Breast epithelium (tissue), 4 donors: ENCODE measurements at regions of chr12 and their contacts with region 1.

Region 1: GRCh38 chr12:120156315-120157259 is 37.9 kb downstream of the GCN1 start:
- DNase-seq: no peak
- H3K4me3 ChIP-seq: no peak overlapping the region
- H3K27ac ChIP-seq: no peak overlapping the region
- H3K4me1 ChIP-seq: no peaks in the 10 kb centered on the region
- H3K27me3 ChIP-seq: no peaks in the 10 kb centered on the region
- CTCF ChIP-seq: no peak
- POLR2A ChIP-seq: no peak

Region 2: DNA sequence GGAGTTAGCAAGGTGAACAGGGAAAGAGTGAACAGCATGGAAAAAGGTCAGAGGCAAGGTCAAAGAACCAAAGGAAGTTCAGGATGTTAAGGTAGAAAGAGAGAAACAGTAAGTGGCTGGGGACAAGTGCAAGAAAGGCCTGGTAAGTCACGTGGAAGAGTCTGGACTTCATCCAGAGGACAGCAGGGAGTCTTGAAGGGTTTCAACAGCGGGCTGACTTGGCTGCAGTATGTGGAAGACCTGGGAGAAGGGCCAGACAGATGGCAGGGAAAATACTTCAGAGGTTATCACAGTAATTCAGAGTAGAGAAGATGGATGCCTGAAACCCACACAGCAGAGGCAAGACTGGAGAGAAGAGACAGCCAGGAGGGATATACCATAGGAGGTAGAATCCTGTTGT is 313.5 kb before region 1 on chr12:
- intact Hi-C with region 1: loop called (anchors 5 kb)
- DNase-seq: no peak
- H3K4me3 ChIP-seq: no peak overlapping the region
- H3K27ac ChIP-seq: no peak overlapping the region
- H3K4me1 ChIP-seq: no peaks in the 10 kb centered on the region
- H3K27me3 ChIP-seq: no peaks in the 10 kb centered on the region
- CTCF ChIP-seq: no peak
- POLR2A ChIP-seq: no peak